ENCODE measurements at regions of chr12 and their contacts with region 1.

Region 1: GRCh38 chr12:56117778-56118687 is at the start of gene ZC3H10:
- DNase-seq: peak; percentile 96
- H3K4me3 ChIP-seq: peak within 1 kb of the TSS; percentile 91
- H3K27ac ChIP-seq: peak within 1 kb of the TSS; percentile 95
- H3K4me1 ChIP-seq: peaks cover 68% of the 10 kb centered on the region
- H3K27me3 ChIP-seq: no peaks in the 10 kb centered on the region
- CTCF ChIP-seq: peak; percentile 63
- total RNA-seq, gene ZC3H10: 4.9 TPM

Region 2: DNA sequence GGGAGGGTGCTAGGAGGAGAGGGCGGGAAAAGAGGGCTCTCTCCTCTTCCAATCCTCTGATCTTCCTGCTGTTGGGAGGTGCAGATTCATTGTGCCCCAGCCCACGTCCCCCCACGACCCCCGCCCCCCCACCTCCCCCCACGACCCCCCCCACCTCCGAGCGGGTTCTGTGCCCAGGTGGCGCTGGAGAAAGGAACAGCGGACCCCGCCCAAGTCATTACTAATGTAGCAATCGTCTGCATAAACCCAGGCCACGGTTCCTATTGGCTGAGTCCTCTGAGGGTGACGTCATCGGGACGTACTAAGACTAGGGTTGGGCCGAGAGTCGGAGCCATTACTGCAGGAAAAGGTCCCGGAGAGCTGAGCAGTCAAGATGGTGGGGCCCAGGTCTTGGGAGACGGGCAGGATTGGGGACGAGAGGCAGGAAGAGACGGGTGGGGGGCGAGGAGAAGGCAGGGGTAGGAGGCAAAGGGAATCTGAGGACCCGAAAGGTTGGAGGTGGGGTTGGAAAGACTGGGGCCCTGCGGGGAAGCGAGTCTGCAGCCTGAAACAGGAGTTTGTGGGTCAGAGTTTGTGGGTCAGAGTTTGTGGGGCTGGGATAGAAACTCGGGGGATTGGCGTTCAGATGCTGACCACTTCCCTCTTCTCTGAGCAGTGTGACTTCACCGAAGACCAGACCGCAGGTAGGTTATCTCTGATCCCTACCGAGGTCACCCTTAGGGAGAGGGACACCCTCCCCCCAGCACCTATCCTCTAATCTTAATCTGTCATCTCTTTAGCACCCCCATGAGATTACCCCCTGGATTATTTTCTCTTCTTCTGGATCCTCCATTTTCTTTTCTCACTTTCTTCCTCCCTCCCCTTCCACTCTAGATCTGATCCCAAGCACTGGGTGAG is 40.2 kb after region 1 on chr12 and contains the start of gene MYL6:
- intact Hi-C with region 1: loop called (anchors 5 kb)
- DNase-seq: peak; percentile 94
- H3K4me3 ChIP-seq: peak within 1 kb of the TSS; percentile 75
- H3K27ac ChIP-seq: peak within 1 kb of the TSS; percentile 96
- H3K4me1 ChIP-seq: peaks cover 56% of the 10 kb centered on the region
- H3K27me3 ChIP-seq: no peaks in the 10 kb centered on the region
- CTCF ChIP-seq: no peak
- total RNA-seq, gene MYL6: 508 TPM

Region 3: DNA sequence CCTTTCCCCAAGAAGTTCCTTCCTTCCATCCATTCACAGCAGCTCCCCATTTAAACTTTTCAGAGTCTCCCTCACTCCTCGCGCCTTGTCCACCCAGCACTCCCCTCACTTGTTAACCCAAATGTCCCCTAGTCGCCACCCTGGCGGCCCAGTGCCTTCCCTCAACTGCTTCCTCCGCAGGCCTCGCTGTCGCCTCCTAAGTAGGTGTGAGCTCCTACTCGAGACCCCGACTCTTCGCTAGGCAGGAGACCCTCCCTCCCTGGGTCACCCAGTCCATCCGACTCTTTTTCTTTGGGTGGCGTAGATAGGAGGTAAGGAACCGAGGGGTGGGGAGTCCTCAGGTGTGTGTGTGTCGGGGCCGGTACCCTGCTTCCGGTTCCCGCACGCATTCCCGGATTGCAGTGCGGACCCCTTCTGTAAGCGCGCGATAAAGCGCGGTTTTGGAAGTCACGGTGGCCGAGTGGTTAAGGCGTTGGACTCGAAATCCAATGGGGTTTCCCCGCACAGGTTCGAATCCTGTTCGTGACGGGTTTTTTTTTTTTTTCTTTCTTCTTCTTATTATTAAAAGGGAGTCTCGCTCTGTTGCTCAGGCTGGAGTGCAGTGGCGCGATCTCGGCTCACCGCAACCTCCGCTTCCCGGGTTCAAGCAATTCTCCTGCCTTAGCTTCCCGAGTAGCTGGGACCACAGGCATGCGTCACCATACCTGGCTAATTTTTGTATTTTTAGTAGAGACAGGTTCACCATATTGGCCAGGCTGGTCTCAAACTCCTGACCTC is 72.1 kb after region 1 on chr12:
- intact Hi-C with region 1: loop called (anchors 5 kb)
- DNase-seq: peak; percentile 72
- H3K4me3 ChIP-seq: peak overlapping the region; percentile 94
- H3K27ac ChIP-seq: peak overlapping the region; percentile 87
- H3K4me1 ChIP-seq: peaks cover 36% of the 10 kb centered on the region
- H3K27me3 ChIP-seq: no peaks in the 10 kb centered on the region
- CTCF ChIP-seq: no peak

Region 4: GRCh38 chr12:56206457-56207166 is 88.6 kb after region 1 on chr12:
- intact Hi-C with region 1: no loop called
- DNase-seq: peak; percentile 43
- H3K4me3 ChIP-seq: no peak overlapping the region
- H3K27ac ChIP-seq: no peak overlapping the region
- H3K4me1 ChIP-seq: peaks cover 17% of the 10 kb centered on the region
- H3K27me3 ChIP-seq: no peaks in the 10 kb centered on the region
- CTCF ChIP-seq: peak; percentile 64

Measured in left ventricle myocardium inferior (tissue), 1 donor.